ENCODE measurements at regions of chr1 and their contacts with region 1.

Region 1: GRCh38 chr1:156797212-156797871 is 19.3 kb downstream of the SH2D2A start:
- DNase-seq: peak in 2 of 3 donors; percentile 28 to 32
- H3K4me3 ChIP-seq: no peak overlapping the region
- H3K4me3 Mint-ChIP-seq: no peak overlapping the region
- H3K27ac ChIP-seq: no peak overlapping the region
- H3K27ac Mint-ChIP-seq: no peak overlapping the region
- H3K4me1 ChIP-seq: no peaks in the 10 kb centered on the region
- H3K4me1 Mint-ChIP-seq: no peaks in the 10 kb centered on the region
- H3K27me3 ChIP-seq: no peaks in the 10 kb centered on the region
- H3K27me3 Mint-ChIP-seq: no peaks in the 10 kb centered on the region
- CTCF ChIP-seq: peak; percentile 81

Region 2: GRCh38 chr1:156859523-156860112 is 62.3 kb after region 1 on chr1:
- intact Hi-C with region 1: loop called in 1 of 2 experiments (anchors 10 kb)
- DNase-seq: no peak
- H3K4me3 ChIP-seq: no peak overlapping the region
- H3K4me3 Mint-ChIP-seq: peak overlapping the region in 1 of 2 donors; percentile 79
- H3K27ac ChIP-seq: no peak overlapping the region
- H3K27ac Mint-ChIP-seq: no peak overlapping the region
- H3K4me1 ChIP-seq: peaks cover 5 to 15% of the 10 kb centered on the region in 2 donors
- H3K4me1 Mint-ChIP-seq: peaks cover 15% of the 10 kb centered on the region
- H3K27me3 ChIP-seq: peaks cover 44 to 66% of the 10 kb centered on the region in 2 donors
- H3K27me3 Mint-ChIP-seq: peaks cover 71 to 84% (median 72%) of the 10 kb centered on the region in 3 donors
- CTCF ChIP-seq: no peak